Posterior cingulate gyrus (tissue), 11 donors: ENCODE measurements at regions of chr21 and their contacts with region 1.

Region 1: GRCh38 chr21:46458315-46459023 is at the start of gene DIP2A:
- DNase-seq: peak; percentile 90 to 100 (median 94)

Region 2: DNA sequence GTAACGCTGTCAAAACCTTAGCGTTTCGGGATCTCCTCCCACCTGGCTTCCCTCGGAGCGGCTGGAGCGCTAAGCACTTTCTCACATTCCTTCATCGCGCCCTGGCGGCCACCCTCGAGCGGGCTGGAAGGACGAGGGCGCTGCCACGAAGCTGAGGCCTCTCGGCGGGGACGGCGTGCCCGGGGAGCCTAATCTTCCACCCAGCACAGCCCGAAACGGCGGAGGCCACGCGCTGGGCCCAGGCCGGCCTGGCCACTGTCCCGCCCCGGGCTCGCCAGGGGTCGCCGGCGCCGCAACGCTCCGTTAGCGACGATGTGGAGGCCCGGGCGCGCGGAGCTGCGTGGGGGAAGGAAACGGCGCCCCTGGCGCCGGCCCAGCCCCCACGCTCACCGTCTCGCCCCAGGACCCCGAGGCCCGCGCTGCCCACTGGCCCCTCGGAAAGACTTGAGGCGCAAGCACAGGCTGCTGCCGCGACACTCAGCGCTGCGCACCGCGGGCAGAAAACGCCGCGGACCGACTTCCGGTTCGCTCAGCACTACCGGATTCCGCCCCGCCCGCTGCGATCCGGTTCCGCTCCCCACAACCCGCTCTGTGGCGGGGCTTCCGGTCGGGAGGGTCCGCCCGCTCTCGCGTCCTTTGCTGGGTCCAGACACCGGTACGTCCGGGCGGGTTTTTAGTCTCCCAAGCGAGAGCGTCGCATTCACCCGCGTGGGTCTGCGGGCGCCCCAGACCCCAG is 172.5 kb before region 1 on chr21 and contains the start of gene YBEY:
- intact Hi-C with region 1: loop called (anchors 5 kb)
- DNase-seq: peak; percentile 81 to 98 (median 92)